Common myeloid progenitor, CD34-positive (primary cell): ENCODE measurements at regions of chr3 and their contacts with region 1.

Region 1: GRCh38 chr3:9736831-9737230 is 5.3 kb downstream of the BRPF1 start:
- DNase-seq: no peak
- H3K4me3 ChIP-seq: no peak overlapping the region
- H3K27ac ChIP-seq: no peak overlapping the region
- H3K4me1 ChIP-seq: peaks cover 3 to 33% (median 24%) of the 10 kb centered on the region in 4 experiments
- H3K27me3 ChIP-seq: no peaks in the 10 kb centered on the region

Region 2: DNA sequence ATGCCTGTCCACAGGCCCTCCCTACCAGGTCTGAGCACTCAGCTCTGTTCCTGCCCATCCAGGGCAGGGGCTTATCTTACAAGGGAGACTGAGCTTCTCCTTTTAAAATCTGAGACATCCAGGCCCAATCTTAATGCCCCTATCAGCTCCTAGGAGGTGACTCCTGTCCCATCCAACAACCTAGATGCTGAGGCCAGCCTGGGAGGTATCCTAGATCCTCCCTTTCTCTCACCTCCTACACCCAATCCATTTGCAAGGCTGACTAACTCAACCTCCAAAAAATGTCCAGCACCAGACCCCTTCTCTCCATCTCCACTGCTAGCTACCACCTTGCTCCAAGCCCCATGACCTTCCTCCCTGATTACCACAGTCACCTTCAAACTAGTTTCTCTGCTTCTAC is 200.6 kb before region 1 on chr3:
- CTCF ChIA-PET with region 1: no interaction called
- POLR2A ChIA-PET with region 1: no interaction called
- DNase-seq: no peak
- H3K4me3 ChIP-seq: no peak overlapping the region
- H3K27ac ChIP-seq: no peak overlapping the region
- H3K4me1 ChIP-seq: no peaks in the 10 kb centered on the region
- H3K27me3 ChIP-seq: peaks cover 0 to 26% (median 8%) of the 10 kb centered on the region in 5 experiments

Region 3: GRCh38 chr3:9749645-9750555 is 13.1 kb after region 1 on chr3 and contains the start of gene OGG1:
- CTCF ChIA-PET with region 1: interaction called, 68 read pairs
- POLR2A ChIA-PET with region 1: interaction called, 16 read pairs
- DNase-seq: peak; percentile 98 to 99 (median 99)
- H3K4me3 ChIP-seq: peak within 1 kb of the TSS; percentile 61 to 89 (median 75)
- H3K27ac ChIP-seq: peak within 1 kb of the TSS; percentile 25 to 67
- H3K4me1 ChIP-seq: peaks cover 0 to 34% (median 19%) of the 10 kb centered on the region in 4 experiments
- H3K27me3 ChIP-seq: no peaks in the 10 kb centered on the region